ENCODE measurements at regions of chr11 and their contacts with region 1.

Region 1: GRCh38 chr11:10606536-10607208 is 38.2 kb upstream of the LYVE1 start:
- DNase-seq: no peak
- ATAC-seq: peak; percentile 84
- H3K4me3 Mint-ChIP-seq: peak overlapping the region; percentile 73
- H3K27ac Mint-ChIP-seq: peak overlapping the region; percentile 90
- H3K4me1 Mint-ChIP-seq: peaks cover 99% of the 10 kb centered on the region
- H3K27me3 Mint-ChIP-seq: no peaks in the 10 kb centered on the region
- CTCF ChIP-seq: no peak

Region 2: DNA sequence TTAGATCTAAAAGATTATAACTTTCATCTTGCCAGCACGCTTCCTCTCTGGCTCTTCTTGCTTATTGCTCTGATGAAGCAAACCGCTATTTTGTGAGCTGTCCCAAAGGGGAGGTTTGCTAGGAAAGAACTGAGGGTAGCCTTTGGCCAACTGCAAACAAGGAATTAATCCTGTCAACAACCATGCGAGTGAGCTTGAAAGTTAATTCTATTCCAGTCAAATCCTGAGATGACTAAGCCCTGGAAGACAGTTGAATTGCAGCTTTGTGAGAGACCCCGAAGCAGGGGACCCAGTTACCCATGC is 55.4 kb before region 1 on chr11:
- CTCF ChIA-PET with region 1: no interaction called
- POLR2A ChIA-PET with region 1: no interaction called
- intact Hi-C with region 1: no loop called
- DNase-seq: no peak
- ATAC-seq: no peak
- H3K4me3 Mint-ChIP-seq: no peak overlapping the region
- H3K27ac Mint-ChIP-seq: no peak overlapping the region
- H3K4me1 Mint-ChIP-seq: peaks cover 24% of the 10 kb centered on the region
- H3K27me3 Mint-ChIP-seq: no peaks in the 10 kb centered on the region
- CTCF ChIP-seq: no peak

Region 3: DNA sequence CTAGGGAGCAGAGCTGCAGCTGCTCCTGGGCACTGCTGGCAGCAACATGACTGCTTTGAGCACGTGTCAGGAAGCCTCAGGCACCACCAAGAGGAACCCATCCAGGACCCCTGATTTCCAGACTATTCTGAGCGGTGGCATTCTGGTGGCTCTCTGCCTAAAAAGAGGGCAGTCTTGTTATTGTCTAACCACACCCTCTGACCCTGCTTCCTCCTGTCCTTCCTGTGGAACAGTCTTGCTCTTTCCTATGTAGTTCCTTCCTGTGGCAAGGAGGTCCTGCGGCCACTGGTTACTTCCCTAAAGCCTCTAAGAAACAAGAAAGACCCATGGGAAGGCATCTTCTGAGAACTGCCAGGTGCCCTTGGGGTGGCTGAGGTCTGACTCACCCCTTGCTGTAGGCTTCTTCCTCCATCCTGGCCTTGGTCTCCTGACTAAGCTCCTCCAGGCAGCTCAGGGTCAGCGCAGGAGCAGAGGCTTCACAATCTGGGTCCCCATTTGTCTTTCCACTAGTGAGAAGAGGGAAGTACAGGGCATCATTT is 25.1 kb before region 1 on chr11:
- CTCF ChIA-PET with region 1: no interaction called
- POLR2A ChIA-PET with region 1: interaction called, 6 read pairs
- intact Hi-C with region 1: loop called (anchors 2 kb)
- DNase-seq: no peak
- ATAC-seq: peak; percentile 66
- H3K4me3 Mint-ChIP-seq: no peak overlapping the region
- H3K27ac Mint-ChIP-seq: peak overlapping the region; percentile 80
- H3K4me1 Mint-ChIP-seq: peaks cover 72% of the 10 kb centered on the region
- H3K27me3 Mint-ChIP-seq: no peaks in the 10 kb centered on the region
- CTCF ChIP-seq: no peak

Region 4: DNA sequence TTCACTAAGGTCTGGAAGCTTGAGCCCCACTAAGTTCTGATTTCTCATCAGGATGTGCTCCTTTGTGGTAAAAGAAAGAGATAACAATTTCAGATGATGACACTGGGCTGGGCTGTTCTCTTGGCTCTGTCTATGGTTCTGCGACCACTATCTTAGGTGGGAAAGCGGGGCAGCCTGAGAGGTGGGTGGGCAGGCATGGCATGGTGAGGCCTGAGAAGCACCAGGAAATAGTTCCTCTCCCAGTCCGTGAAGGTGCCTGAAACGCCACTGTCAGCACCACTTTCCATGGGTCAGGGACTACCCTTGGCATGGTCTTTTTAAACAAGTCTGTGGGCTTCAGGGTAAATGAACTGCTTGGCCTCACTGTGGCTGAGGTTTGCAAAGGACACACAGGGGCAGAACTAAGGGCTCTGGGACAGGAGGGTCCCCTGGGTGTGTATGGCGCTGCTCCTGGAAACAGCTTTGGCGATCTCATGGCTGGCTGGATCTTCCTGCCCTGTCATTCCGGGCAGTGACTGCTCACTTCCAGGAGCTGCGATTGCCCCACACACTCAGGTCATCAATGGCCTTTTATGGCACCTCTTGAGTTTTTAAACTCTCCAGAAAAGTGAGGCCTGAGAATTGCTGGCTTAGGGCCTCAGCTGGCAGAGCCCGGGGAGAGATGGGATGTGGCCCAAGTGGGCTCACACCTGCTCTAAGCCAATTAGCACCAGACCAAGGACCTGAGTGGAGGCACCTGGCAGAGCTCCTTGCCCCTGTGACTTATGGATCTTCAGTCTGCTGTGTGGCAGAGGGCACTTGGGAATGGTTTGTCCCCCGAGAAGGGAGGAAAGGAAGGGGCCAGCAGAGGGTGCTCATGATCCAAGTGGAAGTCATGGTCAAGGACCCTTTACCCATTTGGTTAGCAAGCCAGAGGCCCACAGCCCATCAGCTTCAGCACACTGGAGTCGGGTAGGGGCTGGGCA is 17.4 kb after region 1 on chr11:
- CTCF ChIA-PET with region 1: interaction called, 7 read pairs
- POLR2A ChIA-PET with region 1: interaction called, 23 read pairs
- intact Hi-C with region 1: loop called (anchors 1 kb)
- DNase-seq: no peak
- ATAC-seq: peak; percentile 9
- H3K4me3 Mint-ChIP-seq: no peak overlapping the region
- H3K27ac Mint-ChIP-seq: peak overlapping the region; percentile 95
- H3K4me1 Mint-ChIP-seq: peaks cover 77% of the 10 kb centered on the region
- H3K27me3 Mint-ChIP-seq: no peaks in the 10 kb centered on the region
- CTCF ChIP-seq: no peak